ENCODE measurements at regions of chr22 and their contacts with region 1.

Region 1: DNA sequence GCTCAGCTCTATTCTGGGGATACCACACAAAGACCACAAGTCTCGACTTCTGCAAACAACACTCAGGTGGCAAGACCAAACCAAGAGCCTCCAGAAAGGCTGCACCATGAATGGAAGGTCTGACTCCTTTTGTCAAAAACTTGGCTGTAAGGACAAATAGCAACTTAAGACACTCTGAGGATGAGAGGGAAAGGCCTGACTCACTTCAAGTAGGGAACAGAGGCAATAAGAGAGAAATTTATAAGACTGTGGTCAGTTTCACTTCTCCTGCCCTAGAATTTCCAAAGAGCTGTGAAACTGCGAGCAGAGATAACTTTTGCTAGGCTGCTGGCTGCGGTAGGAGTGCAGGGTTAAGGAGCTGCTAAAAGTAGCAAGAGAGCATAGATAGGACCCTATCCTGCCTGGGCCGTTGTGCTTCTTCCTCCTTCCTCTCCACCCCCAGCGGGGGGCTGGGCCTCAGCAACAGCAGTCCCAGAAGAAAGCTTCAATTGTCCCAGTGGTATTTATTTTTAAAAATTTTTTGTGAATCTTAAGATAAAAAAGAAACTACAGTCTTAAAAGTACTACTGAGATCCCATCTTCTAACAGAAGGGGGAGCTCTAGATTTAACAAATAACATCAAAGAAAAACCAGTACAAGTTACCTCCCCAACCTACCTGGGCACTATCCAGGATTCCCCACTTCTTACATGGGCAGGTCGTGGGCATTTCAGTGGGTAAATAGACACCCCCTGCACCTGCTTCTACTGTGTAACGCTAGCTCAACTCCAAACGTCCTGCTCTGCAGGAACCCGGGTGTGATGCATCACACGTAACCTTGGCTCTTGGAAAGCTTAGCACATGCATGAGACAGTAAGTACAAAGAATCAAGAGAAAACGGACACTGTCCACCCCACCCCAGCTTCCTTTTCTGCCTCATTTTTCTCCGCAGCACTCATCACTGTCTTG is 66.4 kb downstream of the SGSM3 start:
- DNase-seq: no peak
- H3K4me3 ChIP-seq: no peak overlapping the region
- H3K27me3 ChIP-seq: no peaks in the 10 kb centered on the region
- CTCF ChIP-seq: peak; percentile 58

Region 2: DNA sequence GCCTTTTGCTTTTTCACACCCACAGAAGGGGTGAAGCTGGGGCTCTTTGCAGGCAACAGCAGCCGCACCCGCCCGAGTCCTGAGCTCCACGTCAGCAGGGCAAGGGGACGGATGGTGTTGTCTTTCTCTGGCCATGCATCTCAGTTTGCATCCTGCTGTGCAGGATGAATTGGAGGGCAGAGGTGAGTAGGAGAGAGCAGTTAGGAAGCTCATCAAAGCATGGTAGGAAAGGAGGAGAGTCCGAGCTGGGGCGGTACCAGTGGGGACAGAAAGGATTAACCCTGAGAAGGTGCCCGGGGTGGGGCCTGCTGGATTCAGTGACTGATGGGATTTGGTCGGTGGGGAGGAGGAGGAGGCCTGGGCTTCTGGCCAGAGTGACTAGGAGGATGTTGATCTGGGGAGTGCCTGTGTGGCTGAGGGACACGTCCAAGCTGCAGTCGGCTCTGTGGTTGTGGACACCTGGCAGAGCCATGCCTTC is 427.4 kb before region 1 on chr22:
- CTCF ChIA-PET with region 1: no interaction called
- POLR2A ChIA-PET with region 1: no interaction called
- DNase-seq: no peak
- H3K4me3 ChIP-seq: no peak overlapping the region
- H3K27me3 ChIP-seq: peaks cover 3% of the 10 kb centered on the region
- CTCF ChIP-seq: no peak

Region 3: DNA sequence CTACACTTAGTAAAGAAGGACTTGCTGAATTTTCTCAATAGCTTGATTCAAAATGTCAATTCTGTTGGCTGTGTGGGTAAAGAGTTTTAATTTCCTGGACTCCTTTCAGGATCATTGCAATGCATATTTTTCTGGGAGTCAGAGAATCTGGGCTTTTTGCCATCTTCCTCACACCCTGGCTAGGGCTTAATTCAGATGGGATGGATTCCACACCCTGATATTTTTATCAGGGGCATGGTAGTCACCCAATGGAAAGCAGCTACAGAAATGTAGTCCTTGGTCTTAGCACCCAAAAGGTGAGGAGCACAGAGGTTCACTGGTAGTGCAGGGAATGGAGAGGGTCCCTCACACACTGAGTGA is 12.9 kb after region 1 on chr22:
- CTCF ChIA-PET with region 1: interaction called, 37 read pairs
- POLR2A ChIA-PET with region 1: no interaction called
- DNase-seq: no peak
- H3K4me3 ChIP-seq: no peak overlapping the region
- H3K27me3 ChIP-seq: no peaks in the 10 kb centered on the region
- CTCF ChIP-seq: no peak

Region 4: GRCh38 chr22:40525249-40525884 is 88.6 kb after region 1 on chr22:
- CTCF ChIA-PET with region 1: interaction called, 16 read pairs
- POLR2A ChIA-PET with region 1: no interaction called
- DNase-seq: no peak
- H3K4me3 ChIP-seq: no peak overlapping the region
- H3K27me3 ChIP-seq: no peaks in the 10 kb centered on the region
- CTCF ChIP-seq: peak; percentile 70

Region 5: GRCh38 chr22:40641269-40641668 is 204.5 kb after region 1 on chr22:
- CTCF ChIA-PET with region 1: interaction called, 55 read pairs
- POLR2A ChIA-PET with region 1: no interaction called
- DNase-seq: no peak
- H3K4me3 ChIP-seq: no peak overlapping the region
- H3K27me3 ChIP-seq: no peaks in the 10 kb centered on the region
- CTCF ChIP-seq: no peak

Measured in BJ (cell line).